OCI-LY7 (cell line): ENCODE measurements at regions of chr5 and their contacts with region 1.

Region 1: GRCh38 chr5:85395526-85395925 is 1010.8 kb upstream of the EDIL3 start:
- DNase-seq: no peak
- H3K4me3 ChIP-seq: no peak overlapping the region
- H3K27ac ChIP-seq: no peak overlapping the region
- H3K4me1 ChIP-seq: no peaks in the 10 kb centered on the region
- CTCF ChIP-seq: no peak

Region 2: GRCh38 chr5:85452322-85453025 is 56.9 kb after region 1 on chr5:
- CTCF ChIA-PET with region 1: no interaction called
- POLR2A ChIA-PET with region 1: no interaction called
- intact Hi-C with region 1: loop called (anchors 10 kb)
- DNase-seq: no peak
- H3K4me3 ChIP-seq: no peak overlapping the region
- H3K27ac ChIP-seq: no peak overlapping the region
- H3K4me1 ChIP-seq: no peaks in the 10 kb centered on the region
- CTCF ChIP-seq: no peak